ENCODE measurements at regions of chr10 and their contacts with region 1.

Region 1: DNA sequence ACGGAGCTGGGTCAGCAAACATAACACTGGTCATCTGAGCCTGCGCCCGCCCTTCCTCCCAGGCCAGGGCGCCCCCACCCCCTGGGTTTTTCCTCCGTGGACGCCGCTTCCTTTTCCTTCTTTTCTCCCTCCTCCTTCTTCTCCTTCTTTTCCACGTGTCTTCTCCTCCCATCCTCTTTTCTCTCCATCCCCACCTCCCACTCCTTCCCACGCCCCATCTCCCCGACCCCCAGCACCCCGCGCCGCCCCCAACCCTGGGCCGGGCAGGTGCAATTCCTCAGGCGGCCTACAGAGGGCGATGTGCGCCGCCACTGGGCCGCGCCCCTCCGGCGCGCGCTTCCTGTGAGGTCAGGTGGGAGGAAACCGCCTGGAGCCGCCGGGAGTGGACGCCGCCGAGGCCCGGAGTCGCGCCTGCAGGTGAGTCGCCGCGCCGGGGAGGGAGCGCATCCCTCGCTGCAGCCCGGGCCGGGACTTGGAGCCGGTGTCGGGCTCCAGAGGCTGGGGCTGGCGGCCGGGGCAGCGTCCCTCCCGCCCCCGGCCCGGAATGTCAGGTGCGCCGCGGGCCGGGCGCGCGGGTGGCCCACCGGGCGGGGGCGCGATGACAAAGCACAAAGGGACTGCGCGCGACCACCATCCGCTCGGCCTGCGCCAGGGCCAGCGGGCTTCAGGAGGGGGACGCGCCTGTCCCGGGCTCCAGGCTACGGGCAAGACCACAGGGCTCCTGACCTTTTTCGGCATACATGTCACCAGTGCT is at the start of gene FAM241B:
- DNase-seq: peak; percentile 97
- H3K4me3 ChIP-seq: peak within 1 kb of the TSS; percentile 76 to 82
- H3K27ac ChIP-seq: peak within 1 kb of the TSS in 1 of 2 experiments; percentile 6; a peak in 1 of 4 replicates
- H3K4me1 ChIP-seq: peaks cover 6 to 17% of the 10 kb centered on the region in 2 experiments; a peak in 2 of 4 replicates
- H3K27me3 ChIP-seq: no peaks in the 10 kb centered on the region; the same call in 1 of the 2 replicates
- CTCF ChIP-seq: peak; percentile 95
- EP300 ChIP-seq: no peak
- RAD21 ChIP-seq: peak; percentile 43
- polyA plus RNA-seq, gene FAM241B: 16.0 and 19.2 TPM in 2 replicates

Region 2: GRCh38 chr10:69588386-69588785 is 41.7 kb before region 1 on chr10:
- CTCF ChIA-PET with region 1: interaction called, 12 read pairs
- POLR2A ChIA-PET with region 1: no interaction called
- DNase-seq: no peak
- H3K4me3 ChIP-seq: no peak overlapping the region
- H3K27ac ChIP-seq: no peak overlapping the region
- H3K4me1 ChIP-seq: no peaks in the 10 kb centered on the region
- H3K27me3 ChIP-seq: no peaks in the 10 kb centered on the region; the same call in 1 of the 2 replicates
- CTCF ChIP-seq: no peak
- EP300 ChIP-seq: no peak
- RAD21 ChIP-seq: no peak

Region 3: GRCh38 chr10:69612760-69613159 is 17.3 kb before region 1 on chr10:
- CTCF ChIA-PET with region 1: interaction called, 15 read pairs
- POLR2A ChIA-PET with region 1: no interaction called
- DNase-seq: no peak
- H3K4me3 ChIP-seq: no peak overlapping the region
- H3K27ac ChIP-seq: no peak overlapping the region
- H3K4me1 ChIP-seq: no peaks in the 10 kb centered on the region
- H3K27me3 ChIP-seq: peaks cover 13% of the 10 kb centered on the region; the same call in 1 of the 2 replicates
- CTCF ChIP-seq: no peak
- EP300 ChIP-seq: no peak
- RAD21 ChIP-seq: no peak

Region 4: GRCh38 chr10:69618746-69619145 is 11.3 kb before region 1 on chr10:
- CTCF ChIA-PET with region 1: interaction called, 15 read pairs
- POLR2A ChIA-PET with region 1: no interaction called
- DNase-seq: no peak
- H3K4me3 ChIP-seq: no peak overlapping the region
- H3K27ac ChIP-seq: no peak overlapping the region
- H3K4me1 ChIP-seq: no peaks in the 10 kb centered on the region
- H3K27me3 ChIP-seq: peaks cover 23% of the 10 kb centered on the region; the same call in 1 of the 2 replicates
- CTCF ChIP-seq: no peak
- EP300 ChIP-seq: no peak
- RAD21 ChIP-seq: no peak

Region 5: GRCh38 chr10:70063418-70064098 is 433.5 kb after region 1 on chr10:
- CTCF ChIA-PET with region 1: no interaction called
- POLR2A ChIA-PET with region 1: no interaction called
- DNase-seq: no peak
- H3K4me3 ChIP-seq: no peak overlapping the region
- H3K27ac ChIP-seq: no peak overlapping the region
- H3K4me1 ChIP-seq: peaks cover 0 to 2% of the 10 kb centered on the region in 2 experiments; a peak in 2 of 4 replicates
- H3K27me3 ChIP-seq: no peaks in the 10 kb centered on the region
- CTCF ChIP-seq: no peak
- EP300 ChIP-seq: no peak
- RAD21 ChIP-seq: no peak